H1 (cell line): ENCODE measurements at regions of chr6 and their contacts with region 1.

Region 1: DNA sequence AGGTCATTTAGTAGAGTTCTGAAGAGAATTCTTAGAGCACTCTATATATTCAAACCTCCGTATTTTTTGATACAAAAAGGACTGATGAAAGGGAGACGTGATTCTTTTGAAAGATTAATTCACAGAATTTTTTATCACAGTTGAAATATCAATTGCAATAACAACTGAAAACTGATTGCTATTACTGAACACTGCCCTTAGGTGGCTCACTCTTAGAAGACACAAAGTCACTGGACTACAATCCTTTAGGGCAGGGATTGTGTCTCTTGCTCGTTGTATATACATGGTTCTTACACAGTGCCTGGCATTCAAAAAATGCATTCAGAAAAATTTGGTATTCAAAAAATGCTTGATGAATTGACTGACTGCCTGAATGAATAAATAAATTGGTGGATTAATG is 17.1 kb upstream of the CALHM6 start:
- DNase-seq: no peak
- H3K4me3 ChIP-seq: no peak overlapping the region
- H3K27ac ChIP-seq: no peak overlapping the region
- H3K4me1 ChIP-seq: 0 out of 7 replicates have a peak, but pooled peaks cover 0 to 2% (median 0%) of the 10 kb centered on the region in 4 experiments
- H3K27me3 ChIP-seq: no peaks in the 10 kb centered on the region
- CTCF ChIP-seq: peak in 2 of 3 experiments; percentile 18 to 54; a peak in 2 of 4 replicates
- EP300 ChIP-seq: no peak
- POLR2A ChIP-seq: no peak
- RAD21 ChIP-seq: peak; percentile 27 to 39

Region 2: DNA sequence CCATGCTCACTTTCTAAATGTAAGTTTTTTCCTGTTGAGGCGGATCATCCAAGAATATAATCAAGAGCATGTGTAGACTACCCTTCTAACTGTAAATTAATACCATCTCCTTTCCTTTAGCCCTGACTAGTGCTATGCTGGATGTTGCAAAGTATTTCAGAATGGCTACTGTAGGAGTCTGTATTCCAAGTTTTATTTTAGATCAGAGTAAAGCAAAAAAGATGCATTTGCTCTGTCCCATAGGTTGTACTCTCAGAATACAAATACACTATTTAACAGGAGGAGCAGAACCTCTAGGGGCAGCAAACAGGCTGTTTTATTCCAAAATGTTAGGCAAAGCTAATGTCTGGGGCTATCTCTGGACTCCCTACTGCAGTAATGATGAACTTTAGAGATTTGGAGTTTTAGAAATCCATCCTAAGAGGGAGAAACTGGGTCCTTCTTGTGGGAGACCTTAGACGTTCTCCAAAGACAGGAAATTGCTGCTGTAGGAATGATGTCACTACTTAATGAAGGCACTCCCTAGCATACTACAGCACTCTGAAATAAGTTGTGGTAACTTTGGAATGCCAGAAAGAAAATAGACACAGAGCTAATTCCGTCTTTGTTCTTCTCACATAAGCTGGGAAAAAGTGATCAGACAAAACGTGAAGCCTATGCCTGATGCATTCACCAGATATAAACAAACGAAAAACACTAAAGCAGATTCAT is 1708.9 kb before region 1 on chr6:
- CTCF ChIA-PET with region 1: no interaction called
- POLR2A ChIA-PET with region 1: no interaction called
- DNase-seq: no peak
- H3K4me3 ChIP-seq: no peak overlapping the region
- H3K27ac ChIP-seq: no peak overlapping the region
- H3K4me1 ChIP-seq: no peaks in the 10 kb centered on the region
- H3K27me3 ChIP-seq: no peaks in the 10 kb centered on the region
- CTCF ChIP-seq: peak in 1 of 3 experiments; percentile 12; a peak in 1 of 4 replicates
- EP300 ChIP-seq: no peak
- POLR2A ChIP-seq: no peak
- RAD21 ChIP-seq: 0 out of 4 replicates have a peak, but pooled peaks of 1 of the 2 experiments have one; percentile 12

Region 3: GRCh38 chr6:116456927-116457326 is 12.8 kb after region 1 on chr6:
- CTCF ChIA-PET with region 1: interaction called, 23 read pairs
- POLR2A ChIA-PET with region 1: interaction called, 3 read pairs
- DNase-seq: no peak
- H3K4me3 ChIP-seq: no peak overlapping the region
- H3K27ac ChIP-seq: no peak overlapping the region
- H3K4me1 ChIP-seq: peaks cover 0 to 3% (median under 1%) of the 10 kb centered on the region in 4 experiments; a peak in 4 of 7 replicates
- H3K27me3 ChIP-seq: peaks cover 5 to 17% (median 13%) of the 10 kb centered on the region in 4 experiments
- CTCF ChIP-seq: no peak
- EP300 ChIP-seq: no peak
- POLR2A ChIP-seq: no peak
- RAD21 ChIP-seq: no peak

Region 4: GRCh38 chr6:116511404-116512110 is 67.5 kb after region 1 on chr6 and contains the start of gene CALHM5:
- CTCF ChIA-PET with region 1: interaction called, 19 read pairs
- POLR2A ChIA-PET with region 1: no interaction called
- DNase-seq: no peak
- H3K4me3 ChIP-seq: no peak within 1 kb of the TSS
- H3K27ac ChIP-seq: peak within 1 kb of the TSS; percentile 31; the same call in 1 of the 2 replicates
- H3K4me1 ChIP-seq: peaks cover 0 to 11% (median 4%) of the 10 kb centered on the region in 4 experiments; a peak in 4 of 7 replicates
- H3K27me3 ChIP-seq: peaks cover 0 to 1% (median 0%) of the 10 kb centered on the region in 4 experiments; a peak in 1 of 7 replicates
- CTCF ChIP-seq: peak in 2 of 3 experiments; percentile 38 to 66; a peak in 2 of 4 replicates
- EP300 ChIP-seq: no peak
- POLR2A ChIP-seq: no peak
- RAD21 ChIP-seq: peak; percentile 30 to 44
- total RNA-seq, gene CALHM5: 0.09 and 0.17 TPM in 2 replicates